AG04450 (cell line): ENCODE measurements at regions of chr2 and their contacts with region 1.

Region 1: DNA sequence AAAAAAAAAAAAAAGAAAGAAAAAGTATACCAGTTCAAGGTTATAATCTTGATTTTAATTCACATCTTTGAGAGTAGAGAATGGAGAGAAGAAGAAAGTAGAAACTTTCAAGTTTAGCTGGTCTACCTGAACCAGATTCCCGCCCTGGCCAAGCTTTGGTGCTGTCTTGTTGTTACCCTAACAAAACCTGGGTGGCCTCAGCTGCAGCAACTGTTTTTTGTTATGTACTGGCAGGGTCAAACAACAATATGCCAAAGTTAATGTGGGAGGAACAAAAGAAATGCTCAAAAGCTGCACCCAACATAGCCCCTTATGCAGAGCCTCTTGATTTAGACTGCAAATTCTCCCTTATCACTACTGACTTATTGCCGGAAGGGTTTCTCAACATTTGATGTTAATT is 165.3 kb upstream of the TFPI start:
- DNase-seq: no peak
- H3K4me3 ChIP-seq: no peak overlapping the region
- H3K27ac ChIP-seq: no peak overlapping the region
- H3K27me3 ChIP-seq: no peaks in the 10 kb centered on the region
- CTCF ChIP-seq: no peak

Region 2: GRCh38 chr2:187748958-187749357 is 29.4 kb after region 1 on chr2:
- CTCF ChIA-PET with region 1: interaction called, 11 read pairs
- POLR2A ChIA-PET with region 1: no interaction called
- DNase-seq: no peak
- H3K4me3 ChIP-seq: no peak overlapping the region
- H3K27ac ChIP-seq: no peak overlapping the region
- H3K27me3 ChIP-seq: no peaks in the 10 kb centered on the region
- CTCF ChIP-seq: no peak